GM10248 (cell line): ENCODE measurements at regions of chr11 and their contacts with region 1.

Region 1: GRCh38 chr11:116835791-116836631 is 1.4 kb downstream of the APOA1 start:
- DNase-seq: peak; percentile 90
- CTCF ChIP-seq: peak; percentile 77

Region 2: DNA sequence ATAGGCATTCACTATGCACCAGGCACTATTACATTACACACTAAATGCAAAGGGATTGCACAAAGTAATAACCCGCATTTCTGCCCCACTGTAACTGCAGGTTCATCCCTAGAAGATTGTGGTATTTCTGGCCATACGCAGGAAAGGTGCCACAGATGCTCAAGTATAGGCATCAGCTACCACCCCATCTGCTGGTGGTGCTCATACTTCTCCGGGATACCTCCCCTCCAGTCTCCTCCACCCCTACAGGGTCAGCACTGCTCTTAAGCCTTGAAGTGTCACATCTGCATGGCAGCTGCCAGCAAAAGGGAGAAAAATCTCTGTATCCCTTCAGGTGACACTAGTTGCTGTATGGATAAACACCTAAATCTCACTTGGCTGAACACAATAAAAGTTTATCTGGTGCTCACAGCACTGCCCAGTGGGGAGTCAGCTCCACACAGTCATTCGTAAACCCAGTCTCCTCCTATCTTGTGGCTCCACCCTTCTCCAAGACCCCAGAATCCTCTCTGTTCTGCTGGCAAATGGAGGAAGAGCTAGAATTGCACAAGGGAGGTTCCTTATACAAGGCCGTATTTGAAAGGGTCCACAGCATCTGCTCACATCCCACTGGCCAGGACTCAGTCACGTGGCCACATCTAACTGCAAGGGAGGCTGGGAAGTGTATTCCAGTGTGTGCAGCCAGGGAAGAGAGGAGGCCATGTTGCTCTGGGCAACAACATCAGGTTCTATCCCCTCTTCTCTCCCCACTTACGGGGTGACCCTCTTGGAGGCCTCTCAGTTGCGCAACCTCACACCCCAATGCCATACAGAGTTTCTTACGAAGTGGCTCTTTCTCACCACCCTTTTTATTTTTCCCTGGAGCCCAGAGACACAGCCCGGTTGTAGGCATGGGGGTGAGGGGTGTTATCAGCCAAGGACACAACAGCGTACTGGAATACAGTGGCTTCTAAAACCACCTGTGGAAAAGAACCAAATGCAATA is 177.9 kb before region 1 on chr11:
- CTCF ChIA-PET with region 1: no interaction called
- POLR2A ChIA-PET with region 1: no interaction called
- DNase-seq: no peak
- CTCF ChIP-seq: no peak

Region 3: DNA sequence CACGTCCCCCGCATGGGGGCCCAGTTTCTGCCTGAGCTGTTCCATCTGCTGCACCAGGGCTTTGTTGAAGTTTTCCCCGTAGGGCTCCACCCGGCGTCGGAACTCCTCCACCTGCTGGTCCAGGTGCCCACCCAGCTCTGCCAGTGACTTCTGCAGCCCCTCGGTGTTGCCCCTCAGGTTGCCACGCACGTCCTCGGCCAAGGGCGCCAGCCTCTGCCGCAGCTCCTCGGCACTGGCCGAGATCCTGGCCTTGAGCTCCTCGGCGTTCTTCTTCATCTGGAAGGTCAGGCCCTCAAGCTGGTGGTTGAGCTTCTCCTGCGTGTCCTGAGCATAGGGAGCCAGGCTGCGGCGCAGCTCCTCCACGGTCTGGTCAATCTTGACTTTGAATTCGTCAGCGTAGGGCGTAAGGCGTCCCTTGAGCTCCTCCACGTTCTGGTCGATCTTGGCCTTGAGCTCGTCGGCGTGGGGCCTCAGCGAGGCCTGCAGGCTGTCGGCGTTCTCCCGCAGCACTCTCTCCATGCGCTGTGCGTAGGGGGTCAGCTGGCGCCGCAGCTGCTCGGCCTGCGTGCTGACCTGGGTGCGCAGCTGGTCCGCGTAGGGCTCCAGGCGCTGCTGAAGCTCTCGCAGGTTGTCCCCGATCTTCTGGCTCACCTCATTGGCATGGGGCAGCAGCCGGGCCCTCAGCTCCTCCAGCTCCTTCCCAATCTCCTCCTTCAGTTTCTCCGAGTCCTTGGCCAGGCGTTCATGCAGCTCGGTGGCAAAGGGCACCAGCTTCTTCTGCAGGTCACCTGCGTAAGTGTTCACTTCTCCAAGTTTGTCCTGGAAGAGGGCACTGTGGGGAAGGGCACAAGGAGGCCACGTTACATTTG is 14.7 kb before region 1 on chr11:
- CTCF ChIA-PET with region 1: interaction called, 50 read pairs
- POLR2A ChIA-PET with region 1: no interaction called
- DNase-seq: no peak
- CTCF ChIP-seq: no peak

Region 4: DNA sequence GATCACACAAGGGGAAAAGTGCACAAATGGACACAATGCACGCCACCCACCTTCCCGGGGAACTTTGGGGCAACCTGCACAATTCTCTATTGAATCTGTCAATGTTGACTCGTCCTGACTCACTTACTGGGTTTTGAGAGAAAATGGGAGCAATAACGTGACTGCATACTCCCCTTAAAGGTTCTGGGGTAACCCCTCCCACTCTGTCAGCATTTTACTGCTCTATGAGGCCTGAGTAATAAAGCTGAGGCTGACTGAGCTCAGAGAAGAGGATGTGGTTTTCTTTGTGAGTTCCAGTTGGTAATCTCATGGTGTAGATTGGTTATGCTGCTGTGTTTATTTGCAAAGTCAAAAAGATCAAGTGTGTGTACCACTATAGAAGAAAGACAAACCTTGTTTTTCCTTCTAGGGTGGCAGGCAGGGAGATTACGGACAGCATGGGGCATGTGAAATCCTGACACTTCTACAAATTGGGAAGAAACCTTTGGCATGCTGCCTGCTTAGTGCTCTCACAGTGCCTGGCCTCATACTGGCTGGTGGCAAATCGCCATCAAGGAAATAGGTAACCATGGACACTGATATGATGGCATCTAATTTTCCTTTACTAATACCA is 17.6 kb after region 1 on chr11:
- CTCF ChIA-PET with region 1: interaction called, 34 read pairs
- POLR2A ChIA-PET with region 1: no interaction called
- DNase-seq: peak; percentile 88
- CTCF ChIP-seq: no peak

Region 5: DNA sequence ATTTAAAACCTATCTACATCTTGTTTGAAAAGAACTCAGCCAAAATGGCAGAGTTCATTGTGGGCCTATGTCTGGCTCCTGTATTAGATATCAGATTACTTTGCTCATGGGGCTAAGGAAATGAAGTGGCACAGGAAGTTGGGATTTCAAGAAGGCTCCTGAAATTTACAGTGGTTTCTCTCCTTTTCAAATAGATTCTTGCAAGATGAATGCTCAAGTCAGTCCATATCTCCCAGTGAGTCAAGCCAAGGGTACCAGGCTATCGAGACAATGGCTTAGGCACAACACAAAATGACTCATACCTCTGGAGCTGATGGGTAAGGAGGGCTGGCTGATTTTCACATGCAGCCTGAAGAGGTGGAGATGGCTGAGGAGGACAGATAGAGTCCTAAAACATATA is 25.5 kb after region 1 on chr11:
- CTCF ChIA-PET with region 1: interaction called, 14 read pairs
- POLR2A ChIA-PET with region 1: no interaction called
- DNase-seq: no peak
- CTCF ChIP-seq: no peak